ENCODE measurements at regions of chr2 and their contacts with region 1.

Region 1: DNA sequence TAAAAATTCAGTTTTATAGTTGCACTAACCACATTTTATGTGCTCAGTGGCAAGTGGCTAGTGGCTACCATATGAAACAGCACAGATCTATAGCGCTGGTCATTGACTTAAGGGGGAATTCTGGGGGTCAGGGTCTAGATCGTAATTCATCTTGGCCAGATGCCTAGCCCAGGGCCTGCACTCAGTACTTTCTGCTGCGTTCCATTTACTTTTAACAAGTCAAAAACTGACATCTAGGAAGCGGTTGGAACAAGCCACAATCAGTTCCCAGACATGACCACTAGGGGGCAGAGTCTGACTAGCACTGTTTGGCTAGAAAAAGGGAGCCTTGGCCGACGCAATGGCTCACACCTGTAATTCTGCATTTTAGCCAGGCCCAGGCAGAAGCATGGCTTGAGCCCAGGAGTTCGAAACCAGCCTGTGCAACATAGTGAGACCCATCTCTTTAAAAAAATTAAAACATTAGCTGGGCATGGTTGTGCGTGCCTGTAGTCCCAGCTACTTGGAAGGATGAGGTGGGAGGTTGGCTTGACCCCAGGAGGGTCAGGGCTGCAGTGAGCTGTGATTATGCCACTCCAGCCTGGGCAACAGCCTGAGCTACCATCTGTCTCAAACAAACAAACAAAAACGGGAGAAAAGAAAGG is 9.0 kb upstream of the TMBIM1 start:
- DNase-seq: peak; percentile 50 to 93 (median 81)

Region 2: DNA sequence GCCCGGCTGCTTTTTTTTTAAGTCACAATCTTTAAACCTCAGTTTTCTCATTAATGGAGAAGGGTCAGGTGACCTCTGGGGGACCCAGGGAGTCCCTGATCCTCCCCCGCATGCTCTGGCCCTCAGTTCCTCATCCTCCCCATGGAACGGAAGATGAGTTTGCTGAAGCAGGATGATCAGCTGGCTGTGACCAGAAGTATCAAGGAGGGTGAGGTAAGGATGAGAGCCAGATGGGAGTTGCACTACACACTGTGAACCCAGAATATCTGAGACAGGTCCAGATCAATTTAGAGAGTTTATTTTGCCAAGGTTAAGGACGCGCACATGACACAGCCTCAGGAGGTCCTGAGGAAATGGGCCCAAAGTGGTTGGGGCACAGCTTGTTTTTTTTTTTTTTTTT is 59.1 kb after region 1 on chr2:
- intact Hi-C with region 1: loop called (anchors 1 kb)
- DNase-seq: peak in 3 of 10 donors; percentile 9 to 44 (median 32)

Region 3: DNA sequence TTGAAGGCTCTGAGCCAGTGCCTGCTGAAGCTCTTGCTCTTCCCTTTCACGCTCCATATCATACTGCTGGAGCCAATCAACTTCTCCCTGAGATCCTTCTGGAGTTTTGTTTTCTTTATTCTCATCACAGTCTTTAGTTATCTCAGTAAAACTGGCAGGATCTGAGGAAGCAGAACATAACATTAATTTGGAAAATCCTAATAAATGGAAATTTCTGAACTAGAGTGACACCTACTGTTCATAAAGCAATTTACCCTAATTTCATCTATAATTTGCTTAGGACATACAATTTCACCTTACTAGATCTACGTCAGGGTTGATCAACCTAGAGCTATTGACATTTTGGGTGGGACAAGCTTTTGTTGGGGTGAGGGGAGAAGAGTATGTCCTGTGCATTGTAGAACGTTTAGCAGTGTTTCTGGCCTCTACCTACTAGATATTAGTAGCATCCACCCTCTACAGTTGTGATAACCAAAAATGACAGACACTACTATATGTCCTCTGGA is 164.8 kb after region 1 on chr2:
- intact Hi-C with region 1: loop called (anchors 5 kb)
- DNase-seq: no peak

Region 4: DNA sequence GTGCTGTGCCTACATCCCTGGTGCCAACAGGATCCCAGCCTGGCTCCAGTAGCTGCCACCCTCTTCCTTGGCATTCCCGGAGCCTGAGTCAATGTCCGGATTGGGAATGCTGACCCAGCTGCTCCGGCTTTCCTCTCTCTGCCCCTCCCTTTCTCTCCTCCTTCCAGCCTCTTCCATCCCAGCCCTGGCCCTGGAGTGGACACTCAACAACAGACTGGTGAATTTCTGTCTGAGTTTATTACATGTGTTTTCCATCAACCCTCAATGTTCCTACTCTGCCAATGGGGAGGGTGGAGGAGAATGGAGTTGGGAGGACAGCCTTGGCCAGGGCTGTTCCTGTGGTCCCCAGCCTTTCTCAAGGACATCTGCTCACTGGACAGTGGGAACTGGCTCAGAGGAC is 531.2 kb after region 1 on chr2:
- intact Hi-C with region 1: no loop called
- DNase-seq: peak in 1 of 10 donors; percentile 61